CD4-positive, alpha-beta memory T cell (primary cell): ENCODE measurements at regions of chr1 and their contacts with region 1.

Region 1: GRCh38 chr1:194052514-194053333 is 866.3 kb upstream of the B3GALT2 start:
- DNase-seq: peak in 3 of 5 donors; percentile 13 to 34 (median 24)
- H3K4me3 ChIP-seq: no peak overlapping the region
- H3K4me3 Mint-ChIP-seq: peak overlapping the region; percentile 10 to 79 (median 65)
- H3K27ac ChIP-seq: peak overlapping the region; percentile 20
- H3K27ac Mint-ChIP-seq: peak overlapping the region; percentile 50 to 93 (median 90)
- H3K4me1 ChIP-seq: peaks cover 62% of the 10 kb centered on the region
- H3K4me1 Mint-ChIP-seq: peaks cover 55 to 59% (median 58%) of the 10 kb centered on the region in 4 donors
- H3K27me3 ChIP-seq: no peaks in the 10 kb centered on the region
- H3K27me3 Mint-ChIP-seq: no peaks in the 10 kb centered on the region

Region 2: GRCh38 chr1:193417945-193418744 is 634.6 kb before region 1 on chr1:
- CTCF ChIA-PET with region 1: no interaction called
- POLR2A ChIA-PET with region 1: no interaction called
- intact Hi-C with region 1: loop called (anchors 5 kb)
- DNase-seq: peak in 4 of 5 donors; percentile 53 to 62 (median 56)
- H3K4me3 ChIP-seq: peak overlapping the region; percentile 24 to 50
- H3K4me3 Mint-ChIP-seq: peak overlapping the region; percentile 79 to 89 (median 84)
- H3K27ac ChIP-seq: peak overlapping the region; percentile 58
- H3K27ac Mint-ChIP-seq: peak overlapping the region; percentile 76 to 97 (median 92)
- H3K4me1 ChIP-seq: peaks cover 34% of the 10 kb centered on the region
- H3K4me1 Mint-ChIP-seq: peaks cover 32 to 54% (median 36%) of the 10 kb centered on the region in 4 donors
- H3K27me3 ChIP-seq: no peaks in the 10 kb centered on the region
- H3K27me3 Mint-ChIP-seq: no peaks in the 10 kb centered on the region

Region 3: DNA sequence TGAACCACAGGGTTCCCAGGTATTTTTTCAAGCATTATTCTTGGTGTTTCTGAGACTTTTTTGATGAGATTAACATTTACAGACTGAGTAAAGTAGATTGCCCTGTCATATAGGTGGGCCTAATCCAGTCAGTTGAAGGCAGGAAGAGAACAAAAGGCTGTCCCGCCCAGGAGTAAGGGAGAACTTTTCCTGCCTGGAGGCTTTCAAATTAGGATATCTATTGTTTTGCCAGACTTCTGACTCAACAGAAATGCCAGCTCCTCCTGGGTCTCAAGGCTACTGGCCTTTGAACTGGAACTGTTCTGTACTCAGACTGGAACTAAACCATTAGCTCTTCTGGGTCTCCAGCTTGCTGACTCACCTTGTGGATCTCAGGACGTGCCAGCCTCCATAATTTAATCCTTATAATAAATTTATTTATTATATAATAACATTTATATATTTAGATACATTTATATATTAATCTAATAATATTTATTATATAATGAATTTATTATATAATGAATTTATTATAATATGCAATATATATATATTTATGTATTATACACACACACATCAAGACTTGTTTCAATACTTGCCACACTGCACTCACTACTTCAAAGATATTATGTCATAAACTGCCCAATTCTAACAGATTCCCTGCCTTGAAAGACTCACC is 355.5 kb before region 1 on chr1:
- CTCF ChIA-PET with region 1: no interaction called
- POLR2A ChIA-PET with region 1: no interaction called
- intact Hi-C with region 1: no loop called
- DNase-seq: no peak
- H3K4me3 ChIP-seq: no peak overlapping the region
- H3K4me3 Mint-ChIP-seq: no peak overlapping the region
- H3K27ac ChIP-seq: no peak overlapping the region
- H3K27ac Mint-ChIP-seq: no peak overlapping the region
- H3K4me1 ChIP-seq: peaks cover 13% of the 10 kb centered on the region
- H3K4me1 Mint-ChIP-seq: peaks cover 12 to 19% (median 17%) of the 10 kb centered on the region in 4 donors
- H3K27me3 ChIP-seq: no peaks in the 10 kb centered on the region
- H3K27me3 Mint-ChIP-seq: no peaks in the 10 kb centered on the region